ENCODE measurements at regions of chr16 and their contacts with region 1.

Region 1: DNA sequence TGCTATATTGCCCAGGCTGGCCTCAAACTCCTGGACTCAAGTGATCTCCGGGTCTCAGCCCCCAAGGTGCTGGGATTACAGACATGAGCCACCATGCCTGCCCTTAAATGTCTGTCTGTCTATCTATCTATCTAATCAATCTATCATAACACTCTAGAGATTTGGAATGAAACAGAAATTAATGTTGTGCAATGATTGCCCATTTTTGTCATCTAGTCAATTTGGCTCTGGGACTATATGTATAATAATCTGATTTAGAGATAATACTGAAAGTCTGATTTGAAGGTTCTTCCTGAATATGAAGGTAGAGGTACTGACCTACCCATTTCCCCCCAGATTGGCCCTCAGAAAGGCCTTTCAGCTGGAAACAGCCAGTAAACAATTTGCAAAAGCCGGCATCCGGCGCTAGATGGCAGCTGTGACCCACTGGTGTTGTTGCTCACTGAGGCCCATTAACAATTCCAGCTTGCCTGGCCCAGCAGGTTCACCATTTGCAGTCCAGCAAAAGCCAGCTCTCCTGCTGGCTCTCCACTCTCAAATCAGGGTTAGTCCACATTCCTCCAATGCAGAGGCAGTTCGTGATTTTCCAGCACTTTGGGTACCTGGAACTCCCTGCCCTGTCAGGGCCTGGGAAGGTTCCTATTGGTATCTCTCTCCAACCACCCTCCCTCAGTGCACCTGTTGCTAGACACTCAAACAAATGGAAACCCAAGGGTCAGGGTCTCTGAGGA is 22.9 kb upstream of the C16orf87 start:
- DNase-seq: peak; percentile 83
- ATAC-seq: peak; percentile 94

Region 2: DNA sequence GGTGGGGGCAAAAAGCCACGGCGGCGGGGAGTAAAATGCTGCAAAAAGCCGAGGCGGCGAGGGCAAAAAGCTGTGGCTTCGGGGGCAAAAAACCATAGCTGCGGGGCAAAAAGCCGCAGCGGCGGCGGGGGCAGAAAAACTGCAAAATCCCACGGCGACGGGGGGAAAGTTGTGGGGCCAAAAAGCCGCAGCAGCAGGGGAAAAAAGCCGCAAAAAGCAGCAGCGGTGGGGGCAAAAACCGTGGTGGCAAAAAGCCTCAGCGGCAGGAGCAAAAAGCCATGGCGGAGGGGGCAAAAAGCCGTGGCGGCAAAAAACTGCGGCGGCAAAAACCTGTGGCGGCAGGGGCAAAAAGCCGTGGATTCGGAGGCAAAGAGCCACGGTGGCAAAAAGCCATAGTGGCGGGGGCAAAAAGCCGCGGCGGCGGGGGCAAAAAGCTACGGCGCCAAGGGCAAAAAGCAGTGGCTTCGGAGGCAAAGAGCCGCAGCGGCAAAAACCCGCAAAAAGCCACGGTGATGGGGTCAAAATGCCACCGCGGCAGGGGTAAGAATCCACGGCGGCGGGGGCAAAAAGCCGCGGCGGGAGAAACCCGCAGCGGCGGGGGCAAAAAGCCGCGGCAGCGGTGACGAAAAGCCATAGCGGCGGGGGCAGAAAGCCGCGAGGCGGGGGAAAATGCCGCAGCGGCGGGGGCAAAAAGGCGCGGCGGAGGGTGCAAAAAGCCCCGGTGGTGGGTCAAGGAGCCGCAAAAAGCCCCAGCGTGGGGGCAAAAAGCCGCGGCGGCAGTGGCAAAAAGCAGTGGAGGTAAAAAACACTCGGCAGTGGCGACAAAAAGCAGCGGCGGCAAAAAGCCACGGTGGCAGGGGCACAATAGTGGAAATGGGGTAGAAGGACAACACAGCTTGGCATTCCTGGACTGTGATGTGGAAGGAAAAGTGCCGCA is 425.5 kb before region 1 on chr16:
- intact Hi-C with region 1: no loop called
- DNase-seq: no peak
- ATAC-seq: no peak

Region 3: DNA sequence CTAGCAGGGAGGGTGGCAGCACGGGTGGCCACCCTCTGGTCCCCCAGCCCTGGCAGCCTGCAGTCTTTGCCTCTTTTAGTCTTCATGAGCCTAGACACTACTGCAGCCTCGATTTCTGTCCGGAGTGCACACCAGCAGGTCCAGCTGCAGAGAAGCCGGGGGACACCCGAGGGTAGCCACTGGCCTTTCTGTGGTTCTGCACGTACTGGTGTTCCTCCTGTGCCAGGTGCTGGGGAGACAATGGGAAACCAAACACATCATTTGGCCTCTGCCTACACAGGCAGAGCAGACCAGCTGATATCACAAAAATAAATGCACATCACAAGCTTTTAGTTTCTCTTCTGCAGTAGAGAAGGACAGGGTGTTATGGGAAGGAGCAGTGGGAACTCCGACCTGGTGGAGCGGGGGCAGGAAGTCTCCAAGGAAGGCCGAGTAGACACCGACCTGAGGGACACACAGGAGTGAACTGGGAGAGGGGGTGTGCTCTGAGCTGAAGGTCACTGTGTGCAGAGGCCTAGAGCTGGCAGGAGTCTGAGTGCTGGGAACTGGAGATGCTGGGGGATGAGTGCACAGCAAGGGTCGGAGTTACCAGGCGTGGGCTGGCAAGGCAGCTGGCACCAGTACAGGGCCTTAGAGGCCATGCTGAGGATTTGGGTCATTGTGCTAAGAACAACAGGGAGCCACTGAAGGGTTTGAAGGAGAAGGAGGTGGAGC is 53.3 kb after region 1 on chr16:
- intact Hi-C with region 1: loop called (anchors 2 kb)
- DNase-seq: no peak
- ATAC-seq: peak; percentile 53

Region 4: GRCh38 chr16:48330841-48331192 is 1476.9 kb after region 1 on chr16:
- intact Hi-C with region 1: no loop called
- DNase-seq: no peak
- ATAC-seq: peak; percentile 75

Measured in Right ventricle myocardium superior (tissue), 1 donor.